ENCODE measurements at regions of chr1 and their contacts with region 1.

Region 1: GRCh38 chr1:23772049-23772853 is 6.0 kb upstream of the PITHD1 start:
- DNase-seq: no peak
- H3K4me3 ChIP-seq: no peak overlapping the region
- H3K27me3 ChIP-seq: no peaks in the 10 kb centered on the region
- CTCF ChIP-seq: peak; percentile 98

Region 2: DNA sequence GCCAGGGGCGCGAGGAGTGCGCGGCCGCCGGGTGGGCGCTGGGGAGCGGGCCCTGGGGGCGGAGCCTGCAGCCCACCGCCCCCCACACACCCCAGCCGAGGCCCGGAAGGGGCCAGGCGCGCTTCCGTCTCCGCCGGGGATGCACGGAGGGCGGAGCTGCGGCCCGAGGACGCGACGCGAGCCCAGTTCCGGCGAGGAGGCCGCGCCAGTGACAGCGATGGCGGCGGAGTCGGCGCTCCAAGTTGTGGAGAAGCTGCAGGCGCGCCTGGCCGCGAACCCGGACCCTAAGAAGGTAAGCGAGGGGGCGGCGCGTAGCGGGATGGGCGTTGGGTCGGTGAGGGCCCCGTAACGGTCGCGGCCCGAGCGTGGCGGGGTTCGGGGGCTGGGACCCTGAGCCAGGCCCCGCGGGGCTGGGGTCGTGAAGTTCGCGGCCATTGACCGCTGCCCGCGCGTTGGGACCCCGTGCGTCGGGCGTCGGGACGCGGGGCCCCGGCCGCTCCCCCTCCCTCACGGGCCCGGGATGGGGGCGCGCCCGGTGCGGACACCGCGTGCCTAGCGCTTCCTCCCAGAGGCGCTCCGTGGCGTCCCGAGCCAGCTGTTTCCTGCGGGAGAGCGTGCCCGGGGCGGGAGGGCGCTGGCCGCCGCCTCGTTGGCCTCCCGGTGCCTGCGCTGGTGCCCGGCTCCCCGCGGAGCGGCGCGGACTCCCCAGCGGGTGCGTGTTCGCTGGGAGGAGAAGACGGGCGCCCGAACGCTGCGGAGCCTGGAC is 28.8 kb before region 1 on chr1 and contains the start of gene ELOA:
- CTCF ChIA-PET with region 1: interaction called, 14 read pairs
- POLR2A ChIA-PET with region 1: no interaction called
- DNase-seq: no peak
- H3K4me3 ChIP-seq: peak within 1 kb of the TSS; percentile 92
- H3K27me3 ChIP-seq: no peaks in the 10 kb centered on the region
- CTCF ChIP-seq: no peak
- polyA plus RNA-seq, gene ELOA: 21.5 and 24.5 TPM in 2 replicates

Region 3: DNA sequence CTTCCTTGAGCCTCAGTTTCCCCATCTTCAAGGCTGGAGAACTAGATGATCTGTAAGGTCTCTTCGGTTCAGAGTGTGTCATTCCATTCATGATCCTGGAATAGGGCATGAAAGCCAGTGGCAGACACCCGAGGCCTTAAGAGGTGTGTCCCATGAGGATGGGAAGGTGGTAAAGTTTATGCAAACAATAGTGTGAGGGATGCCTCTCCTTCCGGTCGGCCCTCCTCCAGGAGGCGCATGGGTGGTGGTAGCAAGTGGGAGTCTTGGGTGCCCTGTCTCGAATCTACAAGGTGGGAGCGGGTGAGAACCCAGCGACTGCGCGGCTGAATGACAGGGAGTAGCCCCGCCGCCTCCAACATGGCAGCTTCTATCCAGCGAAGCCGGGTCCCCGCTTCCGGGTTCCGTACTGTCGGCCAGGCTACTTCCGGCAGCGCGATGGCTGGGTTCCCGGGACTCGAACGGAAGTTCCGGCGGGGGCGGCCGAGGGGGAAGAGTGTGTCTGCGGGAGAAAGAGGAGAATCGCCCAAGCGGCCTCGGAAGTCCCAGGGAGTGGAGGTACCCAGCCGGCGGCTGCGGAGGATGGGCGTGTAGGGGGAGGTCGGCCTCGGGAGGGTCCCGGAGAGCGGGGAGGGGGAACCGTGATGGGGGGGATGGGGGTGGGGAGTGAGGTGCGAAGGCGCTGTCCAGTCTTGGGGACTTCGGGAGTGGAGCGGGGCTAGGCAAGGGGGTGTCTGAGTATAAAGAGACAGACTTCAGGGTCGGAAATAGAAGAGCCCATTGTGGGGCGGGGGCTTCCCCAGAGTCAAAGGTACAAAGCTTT is 18.7 kb after region 1 on chr1 and contains the start of gene LYPLA2:
- CTCF ChIA-PET with region 1: interaction called, 11 read pairs
- POLR2A ChIA-PET with region 1: no interaction called
- DNase-seq: no peak
- H3K4me3 ChIP-seq: peak within 1 kb of the TSS; percentile 62
- H3K27me3 ChIP-seq: no peaks in the 10 kb centered on the region
- CTCF ChIP-seq: no peak
- polyA plus RNA-seq, gene LYPLA2: 31.3 and 51.9 TPM in 2 replicates

Region 4: GRCh38 chr1:23854568-23854967 is 82.3 kb after region 1 on chr1:
- CTCF ChIA-PET with region 1: interaction called, 15 read pairs
- POLR2A ChIA-PET with region 1: no interaction called
- DNase-seq: no peak
- H3K4me3 ChIP-seq: no peak overlapping the region
- H3K27me3 ChIP-seq: no peaks in the 10 kb centered on the region
- CTCF ChIP-seq: peak; percentile 30

Region 5: GRCh38 chr1:24027838-24028468 is 255.7 kb after region 1 on chr1:
- CTCF ChIA-PET with region 1: interaction called, 13 read pairs
- POLR2A ChIA-PET with region 1: no interaction called
- DNase-seq: no peak
- H3K4me3 ChIP-seq: no peak overlapping the region
- H3K27me3 ChIP-seq: no peaks in the 10 kb centered on the region
- CTCF ChIP-seq: peak; percentile 61

Measured in BJ (cell line).